ENCODE measurements at regions of chr6 and their contacts with region 1.

Region 1: GRCh38 chr6:27146706-27147505 is 100.6 kb upstream of the PRSS16 start:
- DNase-seq: peak; percentile 88

Region 2: GRCh38 chr6:26025894-26026832 is 1120.7 kb before region 1 on chr6:
- intact Hi-C with region 1: loop called (anchors 10 kb)
- DNase-seq: peak; percentile 97

Measured in cardiac septum (tissue), 1 donor.